ENCODE measurements at regions of chr11 and their contacts with region 1.

Region 1: GRCh38 chr11:33736148-33736809 is at the start of gene CD59:
- DNase-seq: peak in 1 of 2 donors; percentile 95
- H3K4me3 ChIP-seq: peak within 1 kb of the TSS; percentile 91 to 99
- H3K27ac ChIP-seq: peak within 1 kb of the TSS; percentile 97
- H3K4me1 ChIP-seq: peaks cover 53% of the 10 kb centered on the region
- H3K27me3 ChIP-seq: no peaks in the 10 kb centered on the region
- CTCF ChIP-seq: no peak
- POLR2A ChIP-seq: peak in 1 of 2 donors; percentile 89
- total RNA-seq, gene CD59: 272 TPM

Region 2: GRCh38 chr11:35598254-35599125 is 1862.2 kb after region 1 on chr11:
- intact Hi-C with region 1: loop called (anchors 10 kb)
- DNase-seq: no peak
- H3K4me3 ChIP-seq: no peak overlapping the region
- H3K27ac ChIP-seq: no peak overlapping the region
- H3K4me1 ChIP-seq: no peaks in the 10 kb centered on the region
- H3K27me3 ChIP-seq: no peaks in the 10 kb centered on the region
- CTCF ChIP-seq: no peak
- POLR2A ChIP-seq: no peak

Measured in vagina (tissue), 2 donors.